H1 (cell line): ENCODE measurements at regions of chr5 and their contacts with region 1.

Region 1: DNA sequence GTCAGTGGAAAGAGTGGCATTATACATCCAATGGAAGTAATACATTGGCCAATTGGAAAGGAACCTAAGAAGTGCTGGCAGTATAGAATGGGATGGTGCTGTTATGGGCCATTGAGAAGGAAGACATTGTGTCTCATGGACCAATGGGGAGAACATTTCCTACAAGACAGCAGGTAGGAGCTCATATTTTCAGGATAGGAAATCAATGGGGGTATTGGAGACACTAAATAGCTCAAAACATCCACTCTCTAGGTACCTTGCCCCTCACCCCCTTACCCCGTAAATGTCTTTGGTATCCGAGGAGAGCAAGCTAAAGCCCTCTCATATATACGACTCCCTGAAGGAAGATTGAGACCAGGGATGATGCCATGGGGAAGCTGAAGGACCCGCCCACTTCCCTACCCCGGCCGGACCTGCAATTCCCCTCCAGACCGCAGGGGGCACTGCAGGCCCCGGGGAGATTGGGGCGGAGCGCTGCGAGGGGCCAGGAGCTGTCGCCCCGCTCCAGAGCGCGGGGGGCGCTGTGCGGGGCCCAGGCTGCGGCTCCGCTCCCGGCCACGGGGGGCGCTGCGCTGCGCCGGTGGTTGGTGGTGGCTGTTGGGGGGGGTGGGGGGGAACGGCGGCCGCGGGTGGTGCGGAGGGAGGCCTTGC is at the start of gene KDM3B:
- DNase-seq: peak; percentile 83 to 100
- H3K4me3 ChIP-seq: peak within 1 kb of the TSS; percentile 58 to 97 (median 95)
- H3K27ac ChIP-seq: peak within 1 kb of the TSS; percentile 82
- H3K4me1 ChIP-seq: peaks cover 0 to 9% (median 3%) of the 10 kb centered on the region in 4 experiments; a peak in 3 of 7 replicates
- H3K27me3 ChIP-seq: no peaks in the 10 kb centered on the region
- CTCF ChIP-seq: peak; percentile 99 to 100 (median 99)
- EP300 ChIP-seq: peak; percentile 17 to 29; a peak in 1 of 3 replicates
- POLR2A ChIP-seq: peak in 1 of 2 experiments; percentile 23; a peak in 1 of 3 replicates
- RAD21 ChIP-seq: peak; percentile 25 to 47; a peak in 3 of 4 replicates
- total RNA-seq, gene KDM3B: 78.1 and 79.7 TPM in 2 replicates

Region 2: DNA sequence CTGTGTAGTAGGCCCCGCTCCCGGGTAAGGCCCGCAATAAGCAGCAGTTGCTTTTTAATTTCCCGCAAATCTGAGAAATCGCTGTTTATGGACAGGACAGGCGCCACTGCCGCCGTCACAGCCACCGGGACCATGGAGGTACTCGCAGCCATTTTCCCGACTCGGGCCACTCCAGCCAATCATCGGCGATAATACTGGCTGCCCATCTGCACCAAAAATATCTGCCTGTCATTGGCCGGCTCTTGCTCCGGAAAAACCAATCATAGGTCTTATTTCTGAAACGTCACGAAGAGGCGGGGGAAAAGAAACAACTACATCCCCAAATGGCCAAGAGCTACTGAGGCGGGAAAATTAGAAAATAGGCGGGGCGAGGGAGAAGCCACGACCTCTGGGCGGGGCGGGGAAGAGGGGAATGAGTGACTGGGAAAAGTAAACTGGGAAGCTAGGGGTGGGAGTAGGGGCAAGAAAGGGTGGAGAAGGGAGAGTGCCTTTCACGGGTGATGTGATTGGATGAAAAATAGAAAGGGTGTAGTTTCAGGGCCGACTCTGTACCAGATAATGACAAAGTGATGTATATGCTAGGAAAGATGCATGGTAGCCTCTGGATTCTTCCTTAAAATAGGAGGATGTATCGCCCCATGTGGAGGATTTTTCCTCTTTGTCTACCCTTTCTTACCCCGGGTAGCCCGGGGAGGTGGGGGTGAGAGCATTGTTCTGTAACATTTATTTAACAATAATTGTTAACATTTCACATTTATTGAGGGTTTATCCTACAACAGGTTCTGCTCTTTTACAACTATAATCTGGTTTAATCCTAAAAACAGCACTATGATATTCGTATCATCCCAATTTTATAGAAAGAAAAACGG is 138.8 kb before region 1 on chr5 and contains the start of gene CDC23:
- CTCF ChIA-PET with region 1: interaction called, 7 read pairs
- POLR2A ChIA-PET with region 1: interaction called, 22 read pairs
- DNase-seq: peak; percentile 90 to 94
- H3K4me3 ChIP-seq: peak within 1 kb of the TSS; percentile 86 to 100 (median 92)
- H3K27ac ChIP-seq: peak within 1 kb of the TSS; percentile 87
- H3K4me1 ChIP-seq: peaks cover 0 to 4% (median 0%) of the 10 kb centered on the region in 4 experiments; a peak in 1 of 7 replicates
- H3K27me3 ChIP-seq: no peaks in the 10 kb centered on the region
- CTCF ChIP-seq: no peak
- EP300 ChIP-seq: no peak
- POLR2A ChIP-seq: peak; percentile 69 to 89
- RAD21 ChIP-seq: no peak
- total RNA-seq, gene CDC23: 43.6 and 45.7 TPM in 2 replicates

Region 3: GRCh38 chr5:138331449-138332368 is 20.5 kb before region 1 on chr5 and contains the start of gene CDC25C:
- CTCF ChIA-PET with region 1: interaction called, 196 read pairs
- POLR2A ChIA-PET with region 1: interaction called, 254 read pairs
- DNase-seq: peak; percentile 96 to 97
- H3K4me3 ChIP-seq: peak within 1 kb of the TSS; percentile 78 to 95 (median 90)
- H3K27ac ChIP-seq: peak within 1 kb of the TSS; percentile 76
- H3K4me1 ChIP-seq: peaks cover 0 to 2% (median 0%) of the 10 kb centered on the region in 4 experiments; a peak in 2 of 7 replicates
- H3K27me3 ChIP-seq: no peaks in the 10 kb centered on the region
- CTCF ChIP-seq: no peak
- EP300 ChIP-seq: no peak
- POLR2A ChIP-seq: peak; percentile 66 to 98
- RAD21 ChIP-seq: no peak
- total RNA-seq, gene CDC25C: 20.8 and 23.2 TPM in 2 replicates

Region 4: DNA sequence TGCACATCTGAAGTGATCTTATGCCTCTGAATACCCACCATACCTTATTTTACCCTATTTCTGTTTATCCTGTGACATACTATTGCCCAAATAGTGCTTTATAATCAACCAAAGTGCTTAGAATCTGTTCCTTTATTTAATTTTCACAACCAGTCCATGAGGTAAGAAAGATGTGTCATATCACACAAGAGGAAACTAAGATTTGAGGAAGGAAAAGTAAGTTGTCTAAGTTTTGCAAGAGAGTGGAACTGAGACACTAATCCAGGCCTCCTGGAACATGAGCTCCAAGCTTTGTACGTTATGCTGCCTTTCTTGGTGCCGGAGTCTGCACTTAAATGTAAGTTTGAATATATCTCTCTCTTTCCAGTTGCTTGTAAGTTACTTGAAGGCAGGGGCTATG is 17.5 kb after region 1 on chr5:
- CTCF ChIA-PET with region 1: interaction called, 63 read pairs
- POLR2A ChIA-PET with region 1: interaction called, 26 read pairs
- DNase-seq: no peak
- H3K4me3 ChIP-seq: no peak overlapping the region
- H3K27ac ChIP-seq: no peak overlapping the region
- H3K4me1 ChIP-seq: no peaks in the 10 kb centered on the region
- H3K27me3 ChIP-seq: no peaks in the 10 kb centered on the region
- CTCF ChIP-seq: no peak
- EP300 ChIP-seq: no peak
- POLR2A ChIP-seq: no peak
- RAD21 ChIP-seq: no peak